Activated naive CD4-positive, alpha-beta T cell treated with anti-CD3 and anti-CD28 coated beads, Interleukin-2, amount 10 ng/mL, durations not matched to agents 7 days and 5 days (primary cell): ENCODE measurements at regions of chr6 and their contacts with region 1.

Region 1: DNA sequence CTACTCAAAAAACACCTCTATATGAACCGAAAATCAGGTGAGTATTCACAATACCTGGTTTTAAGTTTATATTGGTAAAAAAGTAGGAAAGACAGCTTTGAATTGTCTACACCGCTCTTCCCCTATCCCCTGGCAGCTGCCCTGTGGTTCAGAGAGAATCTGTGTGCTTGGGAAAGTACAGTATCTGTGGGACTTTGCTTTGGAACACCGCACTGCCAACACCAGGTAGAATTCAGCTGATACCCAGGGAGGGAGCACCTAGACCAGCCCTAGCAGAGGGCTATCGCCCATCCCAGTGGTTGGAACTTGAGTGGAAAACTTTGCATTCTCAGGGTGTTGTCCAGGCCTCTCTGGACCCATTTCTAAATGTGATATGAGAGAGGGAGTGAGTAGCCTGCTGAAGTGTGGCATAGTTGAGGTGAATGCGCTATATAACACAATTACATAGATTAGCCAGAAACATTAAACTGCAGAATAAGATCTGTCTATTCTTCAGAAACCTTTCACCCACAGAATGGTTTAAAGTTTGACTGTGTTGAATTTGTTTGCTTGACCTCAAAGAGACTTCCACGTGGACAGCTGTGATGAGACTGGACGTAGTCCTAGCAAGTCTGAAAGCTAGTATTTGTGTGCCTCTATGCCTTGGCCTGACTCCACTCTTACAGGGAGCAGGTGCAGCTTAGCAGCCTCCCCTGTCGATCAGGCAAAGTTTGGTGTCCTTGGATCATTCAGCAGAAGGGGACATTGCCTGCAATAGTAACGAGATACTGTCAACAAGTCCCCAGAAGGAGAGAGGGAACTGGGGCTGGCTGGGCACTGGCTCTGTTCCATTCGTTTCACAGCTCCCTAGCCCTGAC is 11.5 kb upstream of the MPC1 start:
- DNase-seq: no peak
- H3K4me3 Mint-ChIP-seq: no peak overlapping the region
- H3K27ac Mint-ChIP-seq: no peak overlapping the region
- H3K4me1 Mint-ChIP-seq: peaks cover 2% of the 10 kb centered on the region
- H3K27me3 Mint-ChIP-seq: peaks cover 45% of the 10 kb centered on the region

Region 2: GRCh38 chr6:166313255-166314070 is 80.8 kb before region 1 on chr6:
- CTCF ChIA-PET with region 1: interaction called, 11 read pairs
- DNase-seq: peak; percentile 64
- H3K4me3 Mint-ChIP-seq: no peak overlapping the region
- H3K27ac Mint-ChIP-seq: no peak overlapping the region
- H3K4me1 Mint-ChIP-seq: no peaks in the 10 kb centered on the region
- H3K27me3 Mint-ChIP-seq: peaks cover 39% of the 10 kb centered on the region